Heart left ventricle (tissue), 16 donors: ENCODE measurements at regions of chr3 and their contacts with region 1.

Region 1: DNA sequence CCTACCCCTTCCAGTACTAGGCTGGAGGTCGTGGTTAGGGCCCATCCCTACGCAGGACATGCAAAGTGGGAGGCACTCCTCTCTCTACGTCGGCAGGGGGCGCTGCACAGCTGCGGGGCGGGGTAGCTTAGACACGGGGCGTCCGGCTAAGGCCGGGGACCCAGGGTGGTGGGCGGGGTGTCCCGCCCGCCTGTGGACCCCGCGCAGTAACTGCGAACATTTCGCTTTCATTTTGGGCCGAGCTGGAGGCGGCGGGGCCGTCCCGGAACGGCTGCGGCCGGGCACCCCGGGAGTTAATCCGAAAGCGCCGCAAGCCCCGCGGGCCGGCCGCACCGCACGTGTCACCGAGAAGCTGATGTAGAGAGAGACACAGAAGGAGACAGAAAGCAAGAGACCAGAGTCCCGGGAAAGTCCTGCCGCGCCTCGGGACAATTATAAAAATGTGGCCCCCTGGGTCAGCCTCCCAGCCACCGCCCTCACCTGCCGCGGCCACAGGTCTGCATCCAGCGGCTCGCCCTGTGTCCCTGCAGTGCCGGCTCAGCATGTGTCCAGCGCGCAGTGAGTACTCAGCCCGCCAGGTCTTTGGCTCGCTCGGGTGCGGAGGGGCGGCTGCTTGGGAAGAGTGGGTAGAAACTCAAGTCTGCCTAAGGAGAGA is at the start of gene IL12A:
- DNase-seq: peak; percentile 78 to 92 (median 81)
- ATAC-seq: peak; percentile 93 to 98 (median 96)
- H3K4me3 ChIP-seq: peak within 1 kb of the TSS; percentile 57 to 92 (median 71)
- H3K27ac ChIP-seq: peak within 1 kb of the TSS in 6 of 12 donors; percentile 3 to 50 (median 32)
- H3K4me1 ChIP-seq: peaks cover 0 to 16% (median 5%) of the 10 kb centered on the region in 12 donors
- H3K27me3 ChIP-seq: no peaks in the 10 kb centered on the region
- CTCF ChIP-seq: peak; percentile 88 to 97 (median 94)
- POLR2A ChIP-seq: no peak
- total RNA-seq, gene IL12A: 0.42 to 3.3 (median 0.56) TPM

Region 2: GRCh38 chr3:158845765-158846350 is 1142.9 kb before region 1 on chr3:
- intact Hi-C with region 1: loop called in 1 of 10 experiments (anchors 10 kb)
- DNase-seq: no peak
- ATAC-seq: no peak
- H3K4me3 ChIP-seq: no peak overlapping the region
- H3K27ac ChIP-seq: no peak overlapping the region
- H3K4me1 ChIP-seq: no peaks in the 10 kb centered on the region
- H3K27me3 ChIP-seq: no peaks in the 10 kb centered on the region
- CTCF ChIP-seq: peak; percentile 40 to 75 (median 62)
- POLR2A ChIP-seq: no peak

Region 3: DNA sequence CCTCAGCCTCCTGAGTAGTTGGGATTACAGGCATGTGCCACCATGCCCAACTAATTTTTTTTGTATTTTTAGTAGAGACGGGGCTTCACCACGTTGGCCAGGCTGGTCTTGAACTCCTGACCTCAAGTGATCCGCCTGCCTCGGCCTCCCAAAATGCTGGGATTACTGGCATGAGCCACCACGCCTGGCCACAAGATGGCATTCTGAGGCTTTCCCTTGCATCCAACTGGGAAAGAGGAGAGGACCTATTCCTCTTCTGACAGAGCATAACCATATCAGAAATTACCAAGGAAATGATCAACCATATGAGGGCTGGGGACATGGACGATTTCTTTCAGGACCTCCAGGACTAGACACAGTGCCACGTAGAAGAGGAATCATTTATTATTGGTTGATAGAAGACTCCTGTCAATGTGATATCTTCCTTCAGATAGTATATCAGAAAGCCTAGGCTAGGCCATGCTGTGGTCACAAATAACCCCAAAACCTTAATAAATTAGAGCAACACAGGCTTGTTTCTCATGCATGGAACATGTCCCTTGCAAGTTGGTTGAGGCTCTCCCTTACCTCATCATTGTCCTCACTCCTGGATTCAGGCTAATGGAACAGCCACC is 372.4 kb before region 1 on chr3:
- intact Hi-C with region 1: loop called in 1 of 10 experiments (anchors 5 kb)
- DNase-seq: peak; percentile 32 to 67 (median 47)
- ATAC-seq: peak; percentile 68 to 81 (median 76)
- H3K4me3 ChIP-seq: no peak overlapping the region
- H3K27ac ChIP-seq: no peak overlapping the region
- H3K4me1 ChIP-seq: peaks cover 0 to 11% (median 3%) of the 10 kb centered on the region in 12 donors
- H3K27me3 ChIP-seq: no peaks in the 10 kb centered on the region
- CTCF ChIP-seq: peak; percentile 33 to 76 (median 65)
- POLR2A ChIP-seq: no peak

Region 4: DNA sequence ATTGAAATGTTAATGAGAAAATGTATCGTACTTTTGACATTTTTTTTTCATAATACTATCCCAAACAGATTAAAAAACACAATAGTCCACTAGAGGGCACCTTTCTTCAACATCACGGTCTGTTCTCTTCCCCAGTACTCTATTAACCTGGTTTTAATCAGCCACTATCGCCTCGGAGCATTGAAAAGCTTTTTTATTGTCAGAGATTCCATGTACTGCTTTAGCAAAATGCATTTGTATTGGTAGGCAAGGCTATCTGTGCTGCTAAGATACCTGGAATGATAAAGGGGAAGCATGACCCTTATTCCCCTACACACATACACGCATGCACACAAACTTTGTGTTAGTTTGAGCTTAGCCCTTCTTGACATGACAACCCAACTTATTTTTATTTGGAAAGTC is 160.2 kb before region 1 on chr3:
- intact Hi-C with region 1: loop called in 1 of 10 experiments (anchors 5 kb)
- DNase-seq: no peak
- ATAC-seq: peak; percentile 41 to 74 (median 52)
- H3K4me3 ChIP-seq: no peak overlapping the region
- H3K27ac ChIP-seq: peak overlapping the region in 6 of 12 donors; percentile 3 to 52 (median 32)
- H3K4me1 ChIP-seq: peaks cover 4 to 61% (median 32%) of the 10 kb centered on the region in 12 donors
- H3K27me3 ChIP-seq: no peaks in the 10 kb centered on the region
- CTCF ChIP-seq: peak; percentile 44 to 74 (median 60)
- POLR2A ChIP-seq: no peak

Region 5: GRCh38 chr3:159884661-159885402 is 103.9 kb before region 1 on chr3:
- intact Hi-C with region 1: loop called in 5 of 10 experiments (anchors 5 kb)
- DNase-seq: no peak
- ATAC-seq: no peak
- H3K4me3 ChIP-seq: no peak overlapping the region
- H3K27ac ChIP-seq: peak overlapping the region in 6 of 12 donors; percentile 11 to 44 (median 34)
- H3K4me1 ChIP-seq: peaks cover 7 to 84% (median 62%) of the 10 kb centered on the region in 12 donors
- H3K27me3 ChIP-seq: no peaks in the 10 kb centered on the region
- CTCF ChIP-seq: peak; percentile 42 to 73 (median 62)
- POLR2A ChIP-seq: no peak

Region 6: DNA sequence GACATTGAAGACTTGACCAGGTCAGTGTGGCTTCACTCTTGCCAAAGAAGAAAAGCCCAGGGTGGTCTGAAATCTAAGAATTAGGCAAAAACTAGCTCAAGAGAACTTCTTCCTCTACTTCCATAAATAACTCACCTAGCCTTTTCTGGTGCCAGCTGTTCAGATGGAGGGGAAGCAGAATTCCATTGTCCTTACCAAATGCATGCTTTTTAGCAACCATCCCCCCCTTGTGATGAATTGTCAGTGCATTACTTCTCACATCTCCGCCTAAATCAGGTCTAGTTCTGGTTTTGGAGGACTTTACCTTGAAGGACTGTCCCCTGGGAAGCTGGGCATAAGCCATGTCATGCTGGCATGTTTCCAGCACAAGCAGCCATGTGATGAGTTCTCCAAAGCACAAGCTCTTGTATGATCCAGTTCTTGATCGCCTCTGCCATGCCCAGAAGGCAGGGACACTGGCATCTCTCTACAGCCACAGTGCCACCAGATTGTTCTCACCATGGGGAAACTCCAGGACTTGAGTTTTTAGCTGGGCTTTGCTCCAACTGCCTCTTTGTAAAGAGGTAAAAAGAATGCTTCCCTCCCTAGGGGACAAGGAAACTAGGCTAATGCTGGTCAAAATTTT is 96.5 kb before region 1 on chr3:
- intact Hi-C with region 1: loop called in 4 of 10 experiments (anchors 5 kb)
- DNase-seq: peak in 4 of 5 donors; percentile 43 to 62 (median 51)
- ATAC-seq: peak; percentile 60 to 81 (median 78)
- H3K4me3 ChIP-seq: no peak overlapping the region
- H3K27ac ChIP-seq: peak overlapping the region; percentile 5 to 59 (median 48)
- H3K4me1 ChIP-seq: peaks cover 0 to 75% (median 50%) of the 10 kb centered on the region in 12 donors
- H3K27me3 ChIP-seq: no peaks in the 10 kb centered on the region
- CTCF ChIP-seq: no peak
- POLR2A ChIP-seq: no peak

Region 7: DNA sequence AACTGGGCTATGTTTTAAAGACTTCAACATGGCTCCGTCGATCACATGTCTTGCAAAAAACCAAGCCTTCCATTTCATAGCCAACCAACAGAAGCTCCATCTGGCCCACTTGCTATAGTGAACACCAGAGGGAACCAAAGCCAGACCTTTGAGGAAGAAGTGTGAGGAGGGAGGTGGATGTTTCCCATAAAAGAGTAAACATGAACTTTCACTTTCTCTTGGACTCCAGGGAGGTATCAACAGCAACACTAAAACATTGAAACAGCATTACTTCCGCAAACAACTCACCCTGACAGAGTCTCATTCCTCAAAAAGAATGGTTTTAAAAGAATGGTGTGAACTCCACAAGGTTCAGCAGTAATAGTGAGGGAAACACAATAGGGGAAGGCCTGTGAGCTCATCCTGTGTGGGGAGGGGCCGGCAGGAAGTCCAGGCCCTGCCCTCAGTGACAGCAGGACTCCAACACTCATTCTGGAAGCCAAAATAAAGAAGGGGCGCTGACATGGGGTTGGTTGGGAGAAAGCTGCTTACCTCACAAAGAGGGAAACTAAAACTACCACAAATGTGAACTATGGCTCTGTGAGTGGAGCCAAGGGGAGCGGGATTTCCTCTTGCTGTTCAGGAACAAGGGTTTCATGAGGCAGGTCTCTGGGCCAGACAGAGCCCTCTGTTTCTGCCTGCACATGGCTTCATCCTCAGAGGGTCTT is 59.2 kb before region 1 on chr3:
- intact Hi-C with region 1: loop called in 1 of 10 experiments (anchors 10 kb)
- DNase-seq: peak in 3 of 5 donors; percentile 32 to 57 (median 49)
- ATAC-seq: peak; percentile 56 to 94 (median 78)
- H3K4me3 ChIP-seq: no peak overlapping the region
- H3K27ac ChIP-seq: peak overlapping the region; percentile 27 to 84 (median 52)
- H3K4me1 ChIP-seq: peaks cover 0 to 26% (median 9%) of the 10 kb centered on the region in 12 donors
- H3K27me3 ChIP-seq: no peaks in the 10 kb centered on the region
- CTCF ChIP-seq: peak in 11 of 12 donors; percentile 18 to 49 (median 30)
- POLR2A ChIP-seq: no peak

Region 8: DNA sequence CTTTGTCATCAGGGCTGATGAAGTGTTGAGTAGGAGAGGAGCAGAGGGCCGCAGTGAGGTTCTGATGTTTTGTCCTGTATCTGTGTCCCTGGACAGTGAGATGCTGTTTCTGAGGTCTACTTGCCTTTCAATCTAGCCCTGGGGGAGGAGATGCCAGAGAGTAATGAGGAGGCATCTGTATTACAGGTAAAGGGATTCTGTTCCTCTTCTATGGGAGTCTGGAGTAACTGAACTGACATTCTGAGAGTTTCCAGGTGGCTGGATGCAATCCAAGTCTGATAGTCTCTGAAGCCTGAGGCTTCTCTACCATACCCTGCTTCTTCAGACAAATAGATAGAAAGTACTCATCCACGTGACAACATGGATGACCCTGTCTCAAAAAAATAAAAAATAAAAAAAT is 60.8 kb after region 1 on chr3:
- intact Hi-C with region 1: no loop called
- DNase-seq: no peak
- ATAC-seq: no peak
- H3K4me3 ChIP-seq: no peak overlapping the region
- H3K27ac ChIP-seq: no peak overlapping the region
- H3K4me1 ChIP-seq: peaks cover 0 to 7% (median 0%) of the 10 kb centered on the region in 12 donors
- H3K27me3 ChIP-seq: no peaks in the 10 kb centered on the region
- CTCF ChIP-seq: no peak
- POLR2A ChIP-seq: no peak

Region 9: DNA sequence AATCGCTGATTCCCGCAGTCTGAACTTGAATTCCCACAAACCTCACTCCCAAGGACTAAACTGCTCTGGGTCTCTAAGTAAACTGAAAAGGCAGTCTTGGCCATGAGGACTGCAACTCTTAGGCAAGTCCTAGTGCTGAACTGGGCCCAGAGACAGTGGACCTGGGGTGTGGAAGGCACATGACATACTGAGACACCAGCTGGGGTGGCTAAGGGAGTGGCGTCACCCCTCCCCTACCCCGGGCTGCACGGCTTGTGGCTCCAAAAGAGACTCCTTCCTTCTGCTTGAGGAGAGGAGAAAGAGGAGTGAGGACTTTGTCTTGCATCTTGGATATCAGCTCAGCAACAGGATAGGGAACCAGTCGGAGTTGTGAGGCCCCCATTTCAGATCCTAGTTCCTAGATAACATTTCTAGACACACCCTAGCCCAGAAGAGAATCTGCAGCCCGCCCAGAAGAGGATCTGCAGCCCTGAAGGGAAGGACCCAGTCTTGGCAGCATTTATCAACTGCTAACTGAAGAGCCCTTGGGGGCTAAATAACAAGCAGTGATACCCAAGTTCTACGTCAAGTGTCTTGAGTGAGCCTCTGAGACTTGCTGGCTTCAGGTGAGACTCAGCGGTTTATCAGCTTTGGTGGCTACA is 125.7 kb after region 1 on chr3:
- intact Hi-C with region 1: no loop called
- DNase-seq: no peak
- ATAC-seq: no peak
- H3K4me3 ChIP-seq: no peak overlapping the region
- H3K27ac ChIP-seq: no peak overlapping the region
- H3K4me1 ChIP-seq: peaks cover 0 to 5% (median 0%) of the 10 kb centered on the region in 12 donors
- H3K27me3 ChIP-seq: peaks cover 0 to 5% (median 0%) of the 10 kb centered on the region in 9 donors
- CTCF ChIP-seq: no peak
- POLR2A ChIP-seq: no peak

Region 10: GRCh38 chr3:160245261-160245800 is 256.6 kb after region 1 on chr3:
- intact Hi-C with region 1: no loop called
- DNase-seq: no peak
- ATAC-seq: no peak
- H3K4me3 ChIP-seq: no peak overlapping the region
- H3K27ac ChIP-seq: no peak overlapping the region
- H3K4me1 ChIP-seq: no peaks in the 10 kb centered on the region
- H3K27me3 ChIP-seq: no peaks in the 10 kb centered on the region
- CTCF ChIP-seq: no peak
- POLR2A ChIP-seq: no peak